Tibial artery (tissue), 4 donors: ENCODE measurements at regions of chr3 and their contacts with region 1.

Region 1: GRCh38 chr3:115469649-115470048 is 153.7 kb upstream of the GAP43 start:
- DNase-seq: no peak
- H3K4me3 ChIP-seq: no peak overlapping the region
- H3K27ac ChIP-seq: no peak overlapping the region
- H3K4me1 ChIP-seq: no peaks in the 10 kb centered on the region
- H3K27me3 ChIP-seq: no peaks in the 10 kb centered on the region
- CTCF ChIP-seq: no peak

Region 2: DNA sequence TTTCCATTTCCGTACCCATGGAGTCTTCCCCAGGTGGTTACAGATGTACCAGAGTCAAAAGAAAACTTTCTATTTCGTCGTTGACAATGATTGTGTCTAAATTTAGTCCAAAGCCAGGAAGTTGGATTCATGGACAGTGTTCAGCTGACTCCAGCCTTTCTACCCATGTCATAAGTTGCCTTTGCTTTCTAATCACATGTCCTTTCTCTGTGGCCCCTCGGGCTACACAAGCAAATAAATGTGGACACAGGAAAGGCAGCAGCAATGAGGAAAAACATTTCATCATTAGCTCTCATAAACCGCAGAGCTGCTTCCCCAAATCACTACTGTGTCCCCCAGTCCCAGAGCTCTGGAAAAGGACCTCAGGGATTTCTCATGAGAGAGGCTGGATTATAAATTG is 1855.2 kb before region 1 on chr3:
- intact Hi-C with region 1: loop called (anchors 10 kb)
- DNase-seq: peak in 1 of 2 donors; percentile 43
- H3K4me3 ChIP-seq: no peak overlapping the region
- H3K27ac ChIP-seq: no peak overlapping the region
- H3K4me1 ChIP-seq: peaks cover 0 to 5% (median 0%) of the 10 kb centered on the region in 4 donors
- H3K27me3 ChIP-seq: no peaks in the 10 kb centered on the region
- CTCF ChIP-seq: no peak